Activated CD8-positive, alpha-beta T cell treated with anti-CD3 and anti-CD28 coated beads, Interleukin-2, amount 10 ng/mL, durations not matched to agents 7 days and 5 days (primary cell): ENCODE measurements at regions of chr17 and their contacts with region 1.

Region 1: GRCh38 chr17:7296189-7296902 is 1.9 kb upstream of the YBX2 start:
- DNase-seq: peak; percentile 71
- ATAC-seq: peak; percentile 27
- H3K4me3 Mint-ChIP-seq: peak overlapping the region; percentile 34
- H3K27ac Mint-ChIP-seq: no peak overlapping the region
- H3K4me1 Mint-ChIP-seq: peaks cover 30% of the 10 kb centered on the region
- H3K27me3 Mint-ChIP-seq: peaks cover 38% of the 10 kb centered on the region

Region 2: GRCh38 chr17:7147772-7148171 is 148.6 kb before region 1 on chr17:
- CTCF ChIA-PET with region 1: no interaction called
- POLR2A ChIA-PET with region 1: no interaction called
- DNase-seq: no peak
- ATAC-seq: no peak
- H3K4me3 Mint-ChIP-seq: no peak overlapping the region
- H3K27ac Mint-ChIP-seq: no peak overlapping the region
- H3K4me1 Mint-ChIP-seq: no peaks in the 10 kb centered on the region
- H3K27me3 Mint-ChIP-seq: peaks cover 4% of the 10 kb centered on the region

Region 3: GRCh38 chr17:7219812-7220581 is 76.3 kb before region 1 on chr17 and contains the starts of genes ACADVL and DLG4:
- CTCF ChIA-PET with region 1: interaction called, 37 read pairs
- POLR2A ChIA-PET with region 1: no interaction called
- DNase-seq: peak; percentile 85
- ATAC-seq: peak; percentile 75
- H3K4me3 Mint-ChIP-seq: peak within 1 kb of the TSS; percentile 96
- H3K27ac Mint-ChIP-seq: peak within 1 kb of the TSS; percentile 95
- H3K4me1 Mint-ChIP-seq: peaks cover 56% of the 10 kb centered on the region
- H3K27me3 Mint-ChIP-seq: no peaks in the 10 kb centered on the region
- total RNA-seq, gene ACADVL: 348 to 371 TPM
- total RNA-seq, gene DLG4: 10.1 to 11.7 TPM

Region 4: DNA sequence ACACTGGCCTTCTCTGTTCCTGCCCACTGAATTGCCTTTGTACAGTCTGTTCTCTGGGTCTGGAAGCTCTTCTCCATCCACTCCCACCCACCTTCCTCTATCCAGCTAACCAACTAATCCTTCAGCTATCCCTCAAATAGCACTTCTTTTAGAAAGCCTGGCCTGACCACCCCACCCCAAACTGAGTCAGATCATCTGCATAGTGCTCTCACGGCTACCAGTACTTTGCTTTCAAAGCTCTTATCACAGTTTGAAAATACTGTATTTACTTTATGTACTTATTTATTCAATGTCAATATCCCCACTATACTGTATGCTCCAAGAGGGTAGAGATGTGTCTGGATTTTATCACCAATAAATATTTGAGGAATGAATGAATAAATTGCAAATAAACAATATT is 29.6 kb before region 1 on chr17:
- CTCF ChIA-PET with region 1: interaction called, 18 read pairs
- POLR2A ChIA-PET with region 1: no interaction called
- DNase-seq: no peak
- ATAC-seq: no peak
- H3K4me3 Mint-ChIP-seq: no peak overlapping the region
- H3K27ac Mint-ChIP-seq: no peak overlapping the region
- H3K4me1 Mint-ChIP-seq: peaks cover 20% of the 10 kb centered on the region
- H3K27me3 Mint-ChIP-seq: peaks cover 31% of the 10 kb centered on the region

Region 5: DNA sequence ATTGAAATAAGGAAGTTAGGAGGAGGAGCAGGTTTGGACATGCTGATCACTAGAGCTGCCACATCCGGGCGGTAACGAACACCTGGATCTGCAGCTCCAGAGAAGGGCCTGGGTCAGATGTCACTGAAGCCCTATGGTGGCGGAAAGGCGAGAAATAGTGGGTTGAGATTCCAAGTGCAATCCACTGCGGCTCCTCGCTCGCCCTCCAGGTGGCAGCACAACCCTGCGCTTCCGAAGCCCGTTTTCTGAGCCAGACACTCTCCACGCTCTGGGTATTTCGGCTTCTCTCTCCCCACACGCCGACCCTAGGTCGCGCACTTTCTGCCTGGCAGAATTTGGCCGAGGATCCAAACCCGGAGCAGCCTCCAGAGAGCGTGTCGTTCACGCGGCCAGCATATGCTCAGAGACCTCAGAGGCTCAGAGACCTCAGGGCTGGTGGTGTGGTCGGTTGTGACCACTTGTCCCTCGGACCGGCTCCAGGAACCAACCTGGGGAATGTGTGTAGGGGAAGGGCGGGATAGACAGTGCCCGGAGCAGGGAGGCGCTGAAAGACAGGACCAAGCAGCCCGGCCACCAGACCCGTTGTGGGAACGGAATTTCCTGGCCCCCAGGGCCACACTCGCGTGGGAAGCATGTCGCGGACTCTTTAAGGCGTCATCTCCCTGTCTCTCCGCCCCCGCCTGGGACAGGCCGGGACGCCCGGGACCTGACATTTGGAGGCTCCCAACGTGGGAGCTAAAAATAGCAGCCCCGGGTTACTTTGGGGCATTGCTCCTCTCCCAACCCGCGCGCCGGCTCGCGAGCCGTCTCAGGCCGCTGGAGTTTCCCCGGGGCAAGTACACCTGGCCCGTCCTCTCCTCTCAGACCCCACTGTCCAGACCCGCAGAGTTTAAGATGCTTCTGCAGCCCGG is 15.6 kb before region 1 on chr17:
- CTCF ChIA-PET with region 1: interaction called, 81 read pairs
- POLR2A ChIA-PET with region 1: interaction called, 8 read pairs
- DNase-seq: peak; percentile 90
- ATAC-seq: peak; percentile 86
- H3K4me3 Mint-ChIP-seq: peak overlapping the region; percentile 73
- H3K27ac Mint-ChIP-seq: peak overlapping the region; percentile 50
- H3K4me1 Mint-ChIP-seq: peaks cover 27% of the 10 kb centered on the region
- H3K27me3 Mint-ChIP-seq: peaks cover 24% of the 10 kb centered on the region

Region 6: GRCh38 chr17:7306911-7307686 is 10.8 kb after region 1 on chr17 and contains the start of gene EIF5A:
- CTCF ChIA-PET with region 1: interaction called, 14 read pairs
- POLR2A ChIA-PET with region 1: interaction called, 3 read pairs
- DNase-seq: peak; percentile 100
- ATAC-seq: peak; percentile 86
- H3K4me3 Mint-ChIP-seq: peak within 1 kb of the TSS; percentile 93
- H3K27ac Mint-ChIP-seq: peak within 1 kb of the TSS; percentile 99
- H3K4me1 Mint-ChIP-seq: peaks cover 38% of the 10 kb centered on the region
- H3K27me3 Mint-ChIP-seq: peaks cover under 1% of the 10 kb centered on the region
- total RNA-seq, gene EIF5A: 685 to 690 TPM

Region 7: DNA sequence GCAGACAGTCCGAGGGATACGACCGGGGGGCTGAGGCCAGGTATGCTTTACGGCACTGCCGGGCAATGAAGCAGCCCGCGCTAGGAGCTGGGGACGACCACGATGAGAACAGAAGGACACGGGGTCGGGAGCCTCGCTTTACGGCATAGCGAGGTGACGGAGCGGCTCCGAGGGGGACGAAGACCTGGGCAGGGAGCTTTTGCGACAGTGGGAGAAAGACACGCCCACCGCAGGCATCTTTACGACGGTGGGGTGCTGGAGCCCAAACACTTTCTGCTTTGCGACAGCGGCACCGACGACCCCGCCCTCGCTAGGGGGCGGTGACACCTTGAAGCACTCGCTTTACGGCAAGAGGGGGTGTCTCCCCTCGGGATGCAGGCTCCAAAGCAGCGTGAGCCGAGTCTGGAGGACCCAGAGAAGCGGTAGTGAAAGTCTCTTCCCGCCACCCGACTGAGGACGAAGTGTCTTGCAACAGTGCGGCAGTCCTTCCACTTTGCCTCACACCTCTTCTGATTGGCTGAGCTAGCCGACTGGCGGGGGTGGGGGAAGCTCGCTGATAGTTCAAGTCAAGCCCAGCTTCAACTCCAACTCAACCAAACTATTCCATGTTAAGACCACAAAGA is 33.1 kb after region 1 on chr17:
- CTCF ChIA-PET with region 1: interaction called, 15 read pairs
- POLR2A ChIA-PET with region 1: no interaction called
- DNase-seq: peak; percentile 98
- ATAC-seq: peak; percentile 63
- H3K4me3 Mint-ChIP-seq: peak overlapping the region; percentile 87
- H3K27ac Mint-ChIP-seq: peak overlapping the region; percentile 98
- H3K4me1 Mint-ChIP-seq: peaks cover 54% of the 10 kb centered on the region
- H3K27me3 Mint-ChIP-seq: no peaks in the 10 kb centered on the region

Region 8: GRCh38 chr17:7336240-7337175 is 40.2 kb after region 1 on chr17 and contains the start of gene ACAP1:
- CTCF ChIA-PET with region 1: interaction called, 15 read pairs
- POLR2A ChIA-PET with region 1: interaction called, 3 read pairs
- DNase-seq: peak; percentile 95
- ATAC-seq: peak; percentile 95
- H3K4me3 Mint-ChIP-seq: peak within 1 kb of the TSS; percentile 85
- H3K27ac Mint-ChIP-seq: peak within 1 kb of the TSS; percentile 98
- H3K4me1 Mint-ChIP-seq: peaks cover 59% of the 10 kb centered on the region
- H3K27me3 Mint-ChIP-seq: no peaks in the 10 kb centered on the region
- total RNA-seq, gene ACAP1: 573 to 605 TPM

Region 9: DNA sequence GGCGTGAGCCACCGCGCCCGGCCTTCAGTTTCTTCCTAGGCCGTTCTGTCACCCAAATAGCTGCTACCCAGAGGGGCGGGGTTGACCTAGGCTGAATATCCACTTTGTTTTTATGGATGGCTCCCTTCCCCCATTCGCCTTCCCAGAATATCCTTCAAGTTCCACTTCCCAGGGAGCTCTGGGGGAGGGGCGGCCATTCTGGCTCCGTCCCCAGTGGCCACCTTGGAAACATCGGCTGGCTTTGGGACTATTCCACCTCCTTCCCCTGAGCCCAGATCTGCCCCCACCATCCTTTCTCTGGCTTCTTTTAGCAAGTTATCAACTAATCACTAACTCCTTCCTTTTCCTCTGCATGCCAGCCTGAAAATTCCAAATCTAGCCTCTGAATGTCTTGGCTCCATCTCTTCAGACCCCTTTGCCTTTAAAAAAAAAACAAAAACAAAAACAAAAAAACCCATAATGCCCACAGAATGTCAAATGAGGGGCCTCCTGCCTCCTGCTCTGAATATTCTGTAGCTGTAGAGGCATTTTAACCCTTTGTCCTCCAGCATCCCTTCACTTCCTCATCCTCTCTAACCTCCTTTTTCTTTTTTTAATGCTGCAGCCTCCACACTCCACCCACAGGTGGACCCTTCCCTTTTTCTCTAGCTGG is 360.7 kb after region 1 on chr17:
- CTCF ChIA-PET with region 1: no interaction called
- POLR2A ChIA-PET with region 1: no interaction called
- DNase-seq: no peak
- ATAC-seq: no peak
- H3K4me3 Mint-ChIP-seq: no peak overlapping the region
- H3K27ac Mint-ChIP-seq: no peak overlapping the region
- H3K4me1 Mint-ChIP-seq: no peaks in the 10 kb centered on the region
- H3K27me3 Mint-ChIP-seq: peaks cover 21% of the 10 kb centered on the region